ENCODE measurements at regions of chr7 and their contacts with region 1.

Region 1: GRCh38 chr7:7103343-7104313 is 78.7 kb upstream of the C1GALT1 start:
- DNase-seq: no peak
- ATAC-seq: peak; percentile 55
- H3K4me3 Mint-ChIP-seq: no peak overlapping the region
- H3K27ac Mint-ChIP-seq: no peak overlapping the region
- H3K4me1 Mint-ChIP-seq: peaks cover 10% of the 10 kb centered on the region
- H3K27me3 Mint-ChIP-seq: no peaks in the 10 kb centered on the region
- CTCF ChIP-seq: peak; percentile 82

Region 2: GRCh38 chr7:7060828-7061599 is 42.6 kb before region 1 on chr7:
- CTCF ChIA-PET with region 1: no interaction called
- POLR2A ChIA-PET with region 1: no interaction called
- intact Hi-C with region 1: no loop called
- DNase-seq: no peak
- ATAC-seq: no peak
- H3K4me3 Mint-ChIP-seq: no peak overlapping the region
- H3K27ac Mint-ChIP-seq: no peak overlapping the region
- H3K4me1 Mint-ChIP-seq: no peaks in the 10 kb centered on the region
- H3K27me3 Mint-ChIP-seq: peaks cover 7% of the 10 kb centered on the region
- CTCF ChIP-seq: no peak

Region 3: DNA sequence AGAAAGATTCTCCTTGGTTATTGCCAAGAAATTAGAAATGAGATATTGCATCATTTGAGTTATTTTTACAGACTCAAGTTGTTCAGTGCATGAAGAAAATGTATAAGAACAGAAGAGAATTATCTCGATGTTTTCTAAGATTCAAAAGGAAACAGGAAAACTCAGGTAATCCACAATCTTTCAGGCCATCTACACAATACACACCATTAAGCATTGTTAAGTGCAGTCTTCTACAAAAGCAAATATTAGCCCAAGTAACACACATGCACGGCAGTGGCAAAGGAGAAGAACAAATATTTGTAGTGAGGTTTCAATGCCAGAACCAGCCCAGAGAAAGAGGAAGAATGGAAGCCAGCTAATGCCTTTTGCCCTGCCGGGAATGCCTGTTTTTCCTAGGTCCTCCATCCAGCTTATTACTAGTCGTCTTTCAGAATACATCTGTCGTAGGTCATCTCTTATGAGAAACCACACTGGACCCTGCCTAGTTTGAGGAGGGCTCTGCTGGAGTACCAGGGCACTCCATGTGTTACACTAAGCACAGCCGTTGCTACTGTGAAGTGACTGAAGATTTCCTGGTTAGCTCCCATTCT is 11.2 kb after region 1 on chr7:
- CTCF ChIA-PET with region 1: interaction called, 18 read pairs
- POLR2A ChIA-PET with region 1: no interaction called
- intact Hi-C with region 1: no loop called
- DNase-seq: no peak
- ATAC-seq: no peak
- H3K4me3 Mint-ChIP-seq: no peak overlapping the region
- H3K27ac Mint-ChIP-seq: no peak overlapping the region
- H3K4me1 Mint-ChIP-seq: no peaks in the 10 kb centered on the region
- H3K27me3 Mint-ChIP-seq: no peaks in the 10 kb centered on the region
- CTCF ChIP-seq: no peak

Region 4: GRCh38 chr7:7408001-7408770 is 304.6 kb after region 1 on chr7:
- CTCF ChIA-PET with region 1: no interaction called
- POLR2A ChIA-PET with region 1: interaction called, 3 read pairs
- intact Hi-C with region 1: loop called (anchors 10 kb)
- DNase-seq: no peak
- ATAC-seq: no peak
- H3K4me3 Mint-ChIP-seq: no peak overlapping the region
- H3K27ac Mint-ChIP-seq: no peak overlapping the region
- H3K4me1 Mint-ChIP-seq: peaks cover 5% of the 10 kb centered on the region
- H3K27me3 Mint-ChIP-seq: peaks cover 3% of the 10 kb centered on the region
- CTCF ChIP-seq: no peak

Region 5: DNA sequence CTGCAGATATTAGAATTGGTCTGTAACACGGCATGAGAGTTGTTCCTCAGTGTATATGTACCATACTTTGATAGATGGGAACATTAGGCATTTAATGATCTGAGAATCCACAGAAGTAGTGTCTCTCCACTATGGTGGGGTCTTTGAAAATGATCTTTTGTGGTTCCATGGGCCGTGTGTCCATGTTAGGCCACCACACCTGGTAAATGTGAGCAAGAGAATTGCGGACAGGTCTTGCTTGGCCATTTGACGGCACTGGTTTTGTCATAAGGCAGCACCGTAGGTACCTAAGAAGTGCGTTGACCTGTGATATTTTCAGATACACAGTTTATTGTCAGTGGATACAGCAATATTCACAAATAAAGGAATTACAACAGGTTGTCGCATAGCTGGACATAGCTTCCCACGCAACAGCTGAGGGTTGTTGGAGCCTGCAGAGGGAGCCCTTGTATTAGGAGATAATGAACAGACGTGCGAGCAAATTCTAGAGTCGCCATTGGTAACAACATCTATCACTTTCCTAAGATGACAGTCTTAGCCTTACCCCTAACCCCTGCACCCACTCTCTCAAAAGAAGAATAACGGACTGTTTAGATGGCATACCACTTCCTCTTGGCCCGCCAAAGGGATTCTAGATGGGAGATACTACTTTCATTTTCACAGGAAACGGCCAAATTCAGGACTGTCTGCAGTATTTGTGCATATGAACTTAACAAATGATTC is 320.7 kb after region 1 on chr7:
- CTCF ChIA-PET with region 1: interaction called, 16 read pairs
- POLR2A ChIA-PET with region 1: no interaction called
- intact Hi-C with region 1: no loop called
- DNase-seq: peak; percentile 62
- ATAC-seq: peak; percentile 85
- H3K4me3 Mint-ChIP-seq: peak overlapping the region; percentile 68
- H3K27ac Mint-ChIP-seq: peak overlapping the region; percentile 55
- H3K4me1 Mint-ChIP-seq: peaks cover 10% of the 10 kb centered on the region
- H3K27me3 Mint-ChIP-seq: no peaks in the 10 kb centered on the region
- CTCF ChIP-seq: peak; percentile 50